Heart right ventricle (tissue), 16 donors: ENCODE measurements at regions of chr7 and their contacts with region 1.

Region 1: DNA sequence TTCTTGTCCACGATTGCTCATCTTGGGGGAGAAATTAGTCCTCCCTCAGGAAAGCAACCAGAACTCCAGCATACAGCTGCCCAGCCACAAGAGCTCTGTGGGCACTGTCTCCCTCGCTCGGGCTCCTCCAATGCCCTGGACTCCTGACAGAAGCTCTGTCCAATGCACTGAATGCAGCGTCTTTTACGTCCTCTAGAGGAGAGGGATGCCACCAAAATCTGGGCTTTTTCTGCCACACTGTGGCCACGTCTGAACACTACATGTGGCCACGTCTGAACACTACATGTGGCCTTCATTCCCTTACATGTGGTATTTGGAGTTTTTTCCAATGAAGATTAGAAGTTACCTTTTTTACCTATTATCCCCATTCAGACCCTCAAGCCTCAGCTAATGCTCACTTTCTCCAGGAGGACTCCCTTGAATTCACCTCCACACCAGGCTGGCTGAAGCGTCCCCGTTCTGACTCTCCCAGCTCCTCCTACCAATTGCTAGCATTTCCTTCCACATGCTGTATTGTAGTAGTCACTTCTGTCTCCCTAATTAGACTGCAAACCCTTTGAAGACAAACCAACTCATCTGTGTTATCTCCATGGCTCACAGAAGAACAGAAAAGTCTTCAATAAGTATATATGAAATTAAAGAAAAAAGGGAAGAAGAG is 134.3 kb upstream of the PDE1C start:
- DNase-seq: peak; percentile 59 to 74
- ATAC-seq: peak; percentile 90 to 97 (median 94)
- H3K4me3 ChIP-seq: peak overlapping the region in 9 of 10 donors; percentile 6 to 51 (median 41)
- H3K27ac ChIP-seq: peak overlapping the region in 1 of 10 donors; percentile 26
- H3K4me1 ChIP-seq: peaks cover 0 to 6% (median 0%) of the 10 kb centered on the region in 9 donors
- H3K27me3 ChIP-seq: peaks cover 0 to 6% (median 0%) of the 10 kb centered on the region in 7 donors
- CTCF ChIP-seq: peak; percentile 50 to 89 (median 74)

Region 2: GRCh38 chr7:31134246-31135188 is 1070.0 kb before region 1 on chr7:
- intact Hi-C with region 1: loop called in 2 of 10 experiments (anchors 10 kb)
- DNase-seq: peak; percentile 59 to 73
- ATAC-seq: peak; percentile 86 to 97 (median 94)
- H3K4me3 ChIP-seq: no peak overlapping the region
- H3K27ac ChIP-seq: peak overlapping the region in 3 of 10 donors; percentile 19 to 62 (median 31)
- H3K4me1 ChIP-seq: peaks cover 0 to 10% (median 0%) of the 10 kb centered on the region in 9 donors
- H3K27me3 ChIP-seq: peaks cover 0 to 7% (median 0%) of the 10 kb centered on the region in 7 donors
- CTCF ChIP-seq: peak; percentile 61 to 84 (median 78)

Region 3: GRCh38 chr7:31648288-31648687 is 556.2 kb before region 1 on chr7:
- intact Hi-C with region 1: loop called in 2 of 10 experiments (anchors 10 kb)
- DNase-seq: no peak
- ATAC-seq: no peak
- H3K4me3 ChIP-seq: no peak overlapping the region
- H3K27ac ChIP-seq: no peak overlapping the region
- H3K4me1 ChIP-seq: peaks cover 0 to 5% (median 0%) of the 10 kb centered on the region in 9 donors
- H3K27me3 ChIP-seq: peaks cover 0 to 5% (median 0%) of the 10 kb centered on the region in 7 donors
- CTCF ChIP-seq: peak in 7 of 9 donors; percentile 9 to 52 (median 45)

Region 4: DNA sequence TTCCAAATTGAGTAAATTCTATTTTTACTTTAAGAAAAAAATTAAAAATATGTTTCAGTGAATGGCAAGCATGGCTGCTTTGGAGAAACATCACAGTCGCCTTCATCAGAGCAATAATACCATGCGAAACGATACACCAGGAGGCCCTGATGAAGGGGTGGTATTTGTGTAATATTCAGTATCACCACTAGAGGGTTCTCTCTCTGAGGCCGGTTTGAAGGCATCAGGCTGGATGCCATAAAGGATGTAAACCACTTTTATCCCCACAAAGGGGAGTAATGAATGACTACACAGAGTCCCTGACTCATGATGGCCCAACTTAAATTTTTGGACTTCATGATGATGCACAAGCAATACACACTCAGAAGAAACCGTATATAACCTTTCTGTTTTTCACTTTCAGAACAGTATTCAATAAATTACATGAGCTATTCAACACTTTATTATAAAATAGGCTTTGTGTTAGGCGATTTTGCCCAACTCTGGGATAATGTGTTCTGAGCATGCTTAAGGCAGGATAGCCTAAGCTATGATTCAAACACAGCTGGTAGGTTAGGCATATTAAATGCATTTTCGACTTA is 422.0 kb before region 1 on chr7:
- intact Hi-C with region 1: loop called in 1 of 10 experiments (anchors 10 kb)
- DNase-seq: no peak
- ATAC-seq: peak; percentile 51 to 69 (median 64)
- H3K4me3 ChIP-seq: no peak overlapping the region
- H3K27ac ChIP-seq: no peak overlapping the region
- H3K4me1 ChIP-seq: peaks cover 0 to 17% (median 3%) of the 10 kb centered on the region in 9 donors
- H3K27me3 ChIP-seq: no peaks in the 10 kb centered on the region
- CTCF ChIP-seq: peak; percentile 59 to 84 (median 77)

Region 5: DNA sequence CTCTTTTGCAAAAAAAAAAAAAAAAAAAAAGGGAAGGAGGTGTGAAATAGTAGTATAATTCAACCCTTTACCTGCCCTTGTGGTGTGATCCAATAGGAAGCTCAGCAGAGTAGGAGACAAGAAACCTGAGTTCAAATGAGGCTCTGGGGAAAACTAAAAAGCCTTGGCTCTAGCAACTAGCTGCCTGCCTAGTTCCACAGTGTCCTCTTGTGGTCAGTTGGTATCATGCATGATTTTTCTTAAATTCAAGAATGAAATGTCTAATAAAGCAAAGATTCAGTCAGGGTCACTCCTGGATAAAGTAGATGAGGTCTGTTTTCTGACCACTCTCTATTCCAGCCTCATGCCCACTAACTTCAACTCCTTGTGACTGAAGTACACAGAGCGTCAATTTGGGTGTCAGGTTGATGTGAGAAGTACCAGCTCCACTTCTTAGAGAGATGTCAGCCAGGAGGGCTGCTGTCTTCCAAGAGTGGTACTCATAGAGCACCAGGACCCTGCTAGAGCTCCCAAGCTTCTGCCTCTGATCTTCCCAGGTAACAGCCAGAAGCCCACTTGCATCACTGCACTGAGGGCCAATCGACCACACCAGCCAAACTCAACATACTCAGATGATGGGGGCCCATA is 275.2 kb after region 1 on chr7:
- intact Hi-C with region 1: loop called in 1 of 10 experiments (anchors 2 kb)
- DNase-seq: peak in 1 of 2 donors; percentile 24
- ATAC-seq: peak in 2 of 8 donors; percentile 27 to 52
- H3K4me3 ChIP-seq: no peak overlapping the region
- H3K27ac ChIP-seq: no peak overlapping the region
- H3K4me1 ChIP-seq: peaks cover 0 to 16% (median 5%) of the 10 kb centered on the region in 9 donors
- H3K27me3 ChIP-seq: no peaks in the 10 kb centered on the region
- CTCF ChIP-seq: peak; percentile 41 to 79 (median 74)

Region 6: GRCh38 chr7:32515890-32516550 is 311.5 kb after region 1 on chr7:
- intact Hi-C with region 1: no loop called
- DNase-seq: no peak
- ATAC-seq: no peak
- H3K4me3 ChIP-seq: no peak overlapping the region
- H3K27ac ChIP-seq: no peak overlapping the region
- H3K4me1 ChIP-seq: peaks cover 0 to 37% (median 8%) of the 10 kb centered on the region in 9 donors
- H3K27me3 ChIP-seq: no peaks in the 10 kb centered on the region
- CTCF ChIP-seq: no peak